ENCODE measurements at regions of chr3 and their contacts with region 1.

Region 1: GRCh38 chr3:188954590-188955208 is 217.1 kb upstream of the TPRG1 start:
- DNase-seq: peak; percentile 71
- H3K4me3 ChIP-seq: no peak overlapping the region
- H3K27ac ChIP-seq: no peak overlapping the region
- H3K27me3 ChIP-seq: no peaks in the 10 kb centered on the region
- CTCF ChIP-seq: peak; percentile 97

Region 2: DNA sequence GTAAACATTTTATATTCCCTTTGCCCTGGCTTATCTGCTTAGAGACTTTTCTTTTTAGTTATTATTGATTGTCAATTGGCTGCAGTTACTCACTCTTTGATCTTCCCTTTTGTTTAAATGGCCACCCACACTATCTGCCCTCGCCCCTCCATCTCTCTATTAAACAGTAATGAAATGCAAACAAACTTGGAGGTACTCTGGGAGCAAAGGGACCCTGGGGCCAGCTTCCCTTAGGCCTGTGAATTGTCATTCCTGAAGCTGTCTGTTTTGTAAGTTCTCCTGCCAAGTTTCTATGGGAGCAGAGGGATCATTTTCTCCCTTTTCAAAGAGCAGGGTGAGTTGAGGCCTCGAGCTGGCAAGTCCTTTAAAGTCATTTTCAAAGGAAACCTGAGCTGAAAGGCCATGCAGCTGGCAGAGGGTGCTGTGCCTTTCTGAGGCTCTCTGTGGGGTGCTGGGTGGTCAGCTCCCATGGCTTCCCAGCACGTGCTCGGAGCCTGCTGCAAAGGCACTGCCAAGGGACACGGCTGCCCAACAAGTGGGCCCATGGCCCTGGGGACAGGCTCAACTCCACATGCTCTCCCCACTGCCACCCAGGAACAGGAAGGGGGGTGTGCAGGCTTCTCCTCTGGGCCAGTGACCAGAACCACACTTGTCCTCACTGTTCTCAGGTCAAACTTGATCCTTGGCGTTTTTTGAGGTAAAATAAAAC is 1234.9 kb before region 1 on chr3:
- CTCF ChIA-PET with region 1: interaction called, 12 read pairs
- POLR2A ChIA-PET with region 1: no interaction called
- DNase-seq: no peak
- H3K4me3 ChIP-seq: no peak overlapping the region
- H3K27ac ChIP-seq: no peak overlapping the region
- H3K27me3 ChIP-seq: peaks cover 7% of the 10 kb centered on the region
- CTCF ChIP-seq: no peak

Region 3: DNA sequence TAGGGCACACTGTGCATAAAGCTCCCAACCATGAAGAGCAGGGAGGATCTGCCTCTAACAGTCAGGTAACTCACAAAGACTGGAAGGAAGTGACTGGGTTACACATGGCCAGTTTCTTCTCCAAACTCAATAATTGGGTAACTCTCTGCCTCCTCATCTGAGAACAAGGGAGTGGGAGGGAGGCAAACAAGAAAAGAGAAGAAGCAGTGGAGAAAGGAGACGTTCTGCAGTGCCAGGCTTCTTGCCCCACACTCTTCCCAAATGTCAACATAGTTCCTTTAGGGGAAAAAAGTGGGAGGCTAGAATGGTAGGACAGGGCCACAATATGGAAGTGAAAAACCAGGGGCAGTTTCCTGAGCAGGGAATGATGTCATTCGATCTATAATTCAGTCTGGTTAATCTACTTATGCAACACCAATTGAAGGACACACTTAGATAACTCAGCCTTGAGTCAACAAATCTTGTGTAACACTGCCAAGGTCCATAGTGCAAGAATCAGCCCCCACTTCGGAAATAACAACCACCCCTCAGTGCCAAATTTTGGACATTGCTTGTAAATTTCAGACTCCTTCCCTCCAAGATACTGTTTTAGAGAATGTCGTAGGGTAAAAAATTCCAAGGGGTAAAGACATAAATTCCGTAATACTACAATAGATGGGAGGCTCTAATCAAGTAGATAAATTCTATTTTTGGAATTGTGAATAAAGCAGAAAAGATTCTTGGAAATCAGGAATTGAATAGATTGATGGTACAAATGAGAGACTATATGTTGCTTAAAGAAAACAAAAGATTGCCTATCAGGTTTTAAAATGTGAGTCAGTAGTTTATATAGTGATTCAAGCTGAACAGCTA is 657.7 kb before region 1 on chr3:
- CTCF ChIA-PET with region 1: interaction called, 15 read pairs
- POLR2A ChIA-PET with region 1: no interaction called
- DNase-seq: no peak
- H3K4me3 ChIP-seq: no peak overlapping the region
- H3K27ac ChIP-seq: peak overlapping the region; percentile 69
- H3K27me3 ChIP-seq: no peaks in the 10 kb centered on the region
- CTCF ChIP-seq: no peak

Region 4: DNA sequence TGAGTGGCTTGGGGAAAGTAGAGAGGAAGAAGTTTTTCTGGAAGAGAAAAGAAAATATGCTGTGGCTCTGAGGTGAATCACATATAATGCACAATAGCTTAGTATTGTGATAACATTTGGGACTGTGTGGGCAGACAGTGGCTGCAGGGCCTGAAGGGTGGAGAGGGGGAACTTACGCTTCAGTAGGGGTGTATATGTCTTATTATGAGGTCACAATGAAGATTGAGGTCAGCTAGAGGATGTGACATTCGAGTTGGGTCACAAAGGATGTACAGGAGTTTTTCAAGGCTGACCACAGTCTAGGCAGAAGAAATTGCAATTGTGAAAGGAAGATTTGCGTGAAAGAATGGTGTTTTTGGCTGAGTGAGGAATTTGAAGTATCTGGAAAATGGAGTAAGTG is 386.0 kb before region 1 on chr3:
- CTCF ChIA-PET with region 1: interaction called, 31 read pairs
- POLR2A ChIA-PET with region 1: no interaction called
- DNase-seq: no peak
- H3K4me3 ChIP-seq: no peak overlapping the region
- H3K27ac ChIP-seq: no peak overlapping the region
- H3K27me3 ChIP-seq: no peaks in the 10 kb centered on the region
- CTCF ChIP-seq: no peak

Region 5: DNA sequence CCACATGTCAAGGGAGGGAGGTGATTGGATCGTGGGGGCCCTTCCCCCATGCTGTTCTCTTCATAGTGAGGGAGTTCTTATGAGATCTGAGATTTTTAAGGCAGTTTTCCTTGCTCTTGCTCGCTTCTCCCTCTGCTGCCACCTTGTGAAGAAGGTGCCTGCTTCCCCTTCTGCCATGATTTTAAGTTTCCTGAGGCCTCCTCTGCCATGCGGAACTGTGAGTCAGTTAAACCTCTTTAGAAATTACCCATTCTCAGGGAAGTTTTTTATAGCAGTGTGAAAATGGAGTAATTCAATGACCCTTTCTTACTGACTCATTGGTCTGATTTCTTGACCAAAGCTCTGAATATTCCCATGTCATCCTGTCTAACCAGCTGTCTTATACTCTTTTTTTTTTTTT is 267.3 kb before region 1 on chr3:
- CTCF ChIA-PET with region 1: interaction called, 29 read pairs
- POLR2A ChIA-PET with region 1: no interaction called
- DNase-seq: no peak
- H3K4me3 ChIP-seq: no peak overlapping the region
- H3K27ac ChIP-seq: no peak overlapping the region
- H3K27me3 ChIP-seq: no peaks in the 10 kb centered on the region
- CTCF ChIP-seq: peak; percentile 44

Region 6: DNA sequence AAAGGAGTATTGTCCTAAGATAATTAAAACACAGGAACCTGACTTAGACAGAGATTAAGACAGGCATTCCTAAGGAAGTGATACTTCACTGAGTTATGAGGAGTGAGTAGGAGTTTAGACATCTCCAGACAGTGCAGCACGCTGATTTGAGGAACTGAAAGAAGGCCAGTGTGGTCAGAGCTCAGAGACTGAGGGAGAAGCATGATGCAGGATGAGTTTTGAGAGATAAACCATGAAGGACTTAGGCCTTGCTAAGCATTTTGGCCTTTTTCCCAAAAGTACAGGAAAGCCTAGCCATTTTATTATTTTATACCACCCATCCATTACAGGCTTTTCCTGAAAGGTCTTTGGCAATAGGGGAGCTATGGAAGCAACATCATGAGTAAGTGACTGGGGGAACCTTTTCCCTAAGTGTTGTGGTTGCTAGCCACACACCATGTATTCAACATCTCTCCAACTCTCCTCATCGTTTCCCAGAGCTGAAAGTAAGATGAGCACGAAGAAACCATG is 158.5 kb before region 1 on chr3:
- CTCF ChIA-PET with region 1: interaction called, 20 read pairs
- POLR2A ChIA-PET with region 1: no interaction called
- DNase-seq: peak; percentile 76
- H3K4me3 ChIP-seq: no peak overlapping the region
- H3K27ac ChIP-seq: peak overlapping the region; percentile 60
- H3K27me3 ChIP-seq: no peaks in the 10 kb centered on the region
- CTCF ChIP-seq: no peak

Region 7: GRCh38 chr3:189883113-189883753 is 928.5 kb after region 1 on chr3:
- CTCF ChIA-PET with region 1: no interaction called
- POLR2A ChIA-PET with region 1: no interaction called
- DNase-seq: no peak
- H3K4me3 ChIP-seq: no peak overlapping the region
- H3K27ac ChIP-seq: no peak overlapping the region
- H3K27me3 ChIP-seq: peaks cover 2% of the 10 kb centered on the region
- CTCF ChIP-seq: no peak